Spleen (tissue), 13 donors: ENCODE measurements at regions of chr15 and their contacts with region 1.

Region 1: GRCh38 chr15:71730277-71731144 is 79.8 kb upstream of the NR2E3 start:
- DNase-seq: no peak
- H3K4me3 ChIP-seq: no peak overlapping the region
- H3K27ac ChIP-seq: no peak overlapping the region
- H3K4me1 ChIP-seq: peaks cover 0 to 7% (median 0%) of the 10 kb centered on the region in 6 donors
- H3K27me3 ChIP-seq: peaks cover 0 to 10% (median 0%) of the 10 kb centered on the region in 7 donors
- CTCF ChIP-seq: peak in 10 of 11 experiments; percentile 8 to 75 (median 63)
- POLR2A ChIP-seq: no peak

Region 2: GRCh38 chr15:70853821-70854666 is 876.5 kb before region 1 on chr15 and contains the start of gene LARP6:
- intact Hi-C with region 1: no loop called
- DNase-seq: no peak
- H3K4me3 ChIP-seq: peak within 1 kb of the TSS; percentile 33 to 76 (median 46)
- H3K27ac ChIP-seq: peak within 1 kb of the TSS in 5 of 8 donors; percentile 28 to 62 (median 55)
- H3K4me1 ChIP-seq: peaks cover 0 to 17% (median 9%) of the 10 kb centered on the region in 6 donors
- H3K27me3 ChIP-seq: peaks cover 3 to 66% (median 14%) of the 10 kb centered on the region in 7 donors
- CTCF ChIP-seq: no peak
- POLR2A ChIP-seq: no peak
- total RNA-seq, gene LARP6: 0.85 to 7.0 (median 3.4) TPM

Region 3: GRCh38 chr15:71448688-71449114 is 281.8 kb before region 1 on chr15:
- intact Hi-C with region 1: loop called (anchors 2 kb)
- DNase-seq: no peak
- H3K4me3 ChIP-seq: no peak overlapping the region
- H3K27ac ChIP-seq: no peak overlapping the region
- H3K4me1 ChIP-seq: no peaks in the 10 kb centered on the region
- H3K27me3 ChIP-seq: peaks cover 0 to 29% (median 0%) of the 10 kb centered on the region in 7 donors
- CTCF ChIP-seq: peak in 10 of 11 experiments; percentile 56 to 83 (median 76)
- POLR2A ChIP-seq: no peak

Region 4: GRCh38 chr15:71572452-71573053 is 158.0 kb before region 1 on chr15:
- intact Hi-C with region 1: loop called (anchors 5 kb)
- DNase-seq: no peak
- H3K4me3 ChIP-seq: no peak overlapping the region
- H3K27ac ChIP-seq: no peak overlapping the region
- H3K4me1 ChIP-seq: no peaks in the 10 kb centered on the region
- H3K27me3 ChIP-seq: peaks cover 0 to 20% (median 0%) of the 10 kb centered on the region in 7 donors
- CTCF ChIP-seq: no peak
- POLR2A ChIP-seq: no peak